BJ (cell line): ENCODE measurements at regions of chr3 and their contacts with region 1.

Region 1: GRCh38 chr3:186617038-186617946 is 4.4 kb downstream of the AHSG start:
- DNase-seq: peak; percentile 91
- H3K4me3 ChIP-seq: peak overlapping the region; percentile 19
- H3K27me3 ChIP-seq: no peaks in the 10 kb centered on the region; the same call in none of the 2 replicates
- CTCF ChIP-seq: peak; percentile 97

Region 2: GRCh38 chr3:185976977-185977678 is 640.2 kb before region 1 on chr3:
- CTCF ChIA-PET with region 1: interaction called, 14 read pairs
- POLR2A ChIA-PET with region 1: no interaction called
- DNase-seq: no peak
- H3K4me3 ChIP-seq: no peak overlapping the region
- H3K27me3 ChIP-seq: no peaks in the 10 kb centered on the region
- CTCF ChIP-seq: peak; percentile 96

Region 3: GRCh38 chr3:186598108-186598784 is 19.0 kb before region 1 on chr3:
- CTCF ChIA-PET with region 1: interaction called, 51 read pairs
- POLR2A ChIA-PET with region 1: interaction called, 7 read pairs
- DNase-seq: no peak
- H3K4me3 ChIP-seq: no peak overlapping the region
- H3K27me3 ChIP-seq: peaks cover 2% of the 10 kb centered on the region; the same call in 1 of the 2 replicates
- CTCF ChIP-seq: no peak

Region 4: DNA sequence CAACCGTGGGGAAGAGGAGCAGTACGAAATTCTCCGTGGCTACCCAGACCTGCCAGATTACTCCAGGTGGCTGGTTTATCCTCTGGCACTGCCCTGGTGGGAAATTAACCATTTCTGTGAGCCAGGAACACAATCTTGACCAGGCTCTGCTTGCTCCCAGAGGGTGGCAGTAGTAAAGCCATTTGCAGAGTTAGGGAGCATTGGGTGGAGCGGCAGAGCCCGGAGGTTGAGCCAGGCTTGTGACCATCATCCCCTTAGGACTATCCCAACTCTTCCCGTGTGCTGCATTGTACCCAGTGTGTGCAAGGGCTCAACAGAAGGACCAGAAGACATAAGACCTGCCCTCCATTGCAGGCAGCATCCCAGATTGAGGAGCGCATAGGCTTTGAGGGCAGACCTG is 105.2 kb after region 1 on chr3:
- CTCF ChIA-PET with region 1: interaction called, 11 read pairs
- POLR2A ChIA-PET with region 1: no interaction called
- DNase-seq: no peak
- H3K4me3 ChIP-seq: no peak overlapping the region
- H3K27me3 ChIP-seq: no peaks in the 10 kb centered on the region; the same call in 1 of the 2 replicates
- CTCF ChIP-seq: peak; percentile 34

Region 5: GRCh38 chr3:186772701-186773424 is 155.6 kb after region 1 on chr3:
- CTCF ChIA-PET with region 1: interaction called, 12 read pairs
- POLR2A ChIA-PET with region 1: no interaction called
- DNase-seq: no peak
- H3K4me3 ChIP-seq: peak overlapping the region; percentile 18
- H3K27me3 ChIP-seq: no peaks in the 10 kb centered on the region
- CTCF ChIP-seq: no peak

Region 6: DNA sequence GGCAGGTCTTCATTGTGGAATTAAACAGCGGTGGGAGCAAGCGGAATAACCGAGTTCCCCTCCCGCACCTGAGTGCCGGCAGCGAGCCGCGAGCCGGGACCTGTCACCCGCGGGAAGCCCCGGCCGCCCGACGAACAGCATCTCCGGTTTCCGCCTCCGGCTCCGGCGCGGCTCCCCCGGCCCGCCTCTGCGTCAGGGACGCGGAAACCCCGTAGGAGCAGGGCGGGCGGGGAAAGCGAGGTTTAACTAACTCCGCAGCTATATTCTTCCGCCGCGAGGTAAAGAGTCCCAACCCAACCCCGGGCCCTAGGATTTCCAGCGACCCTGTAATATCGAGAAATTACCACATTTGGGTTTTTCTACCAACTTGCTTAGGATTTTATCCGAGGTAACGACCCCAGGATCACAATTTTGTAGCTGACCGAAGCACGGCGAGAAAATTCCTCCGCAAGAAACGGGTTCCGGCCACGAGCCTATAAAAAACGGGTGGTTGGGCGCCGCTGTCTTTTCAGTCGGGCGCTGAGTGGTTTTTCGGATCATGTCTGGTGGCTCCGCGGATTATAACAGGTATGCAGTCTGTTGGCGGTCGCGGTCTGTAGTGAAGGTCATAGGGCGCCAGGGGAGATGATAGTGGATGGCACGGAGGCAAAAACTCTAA is 165.9 kb after region 1 on chr3 and contains the start of gene EIF4A2:
- CTCF ChIA-PET with region 1: interaction called, 10 read pairs
- POLR2A ChIA-PET with region 1: interaction called, 3 read pairs
- DNase-seq: no peak
- H3K4me3 ChIP-seq: peak within 1 kb of the TSS; percentile 93
- H3K27me3 ChIP-seq: no peaks in the 10 kb centered on the region
- CTCF ChIP-seq: no peak
- polyA plus RNA-seq, gene EIF4A2: 210 and 511 TPM in 2 replicates

Region 7: DNA sequence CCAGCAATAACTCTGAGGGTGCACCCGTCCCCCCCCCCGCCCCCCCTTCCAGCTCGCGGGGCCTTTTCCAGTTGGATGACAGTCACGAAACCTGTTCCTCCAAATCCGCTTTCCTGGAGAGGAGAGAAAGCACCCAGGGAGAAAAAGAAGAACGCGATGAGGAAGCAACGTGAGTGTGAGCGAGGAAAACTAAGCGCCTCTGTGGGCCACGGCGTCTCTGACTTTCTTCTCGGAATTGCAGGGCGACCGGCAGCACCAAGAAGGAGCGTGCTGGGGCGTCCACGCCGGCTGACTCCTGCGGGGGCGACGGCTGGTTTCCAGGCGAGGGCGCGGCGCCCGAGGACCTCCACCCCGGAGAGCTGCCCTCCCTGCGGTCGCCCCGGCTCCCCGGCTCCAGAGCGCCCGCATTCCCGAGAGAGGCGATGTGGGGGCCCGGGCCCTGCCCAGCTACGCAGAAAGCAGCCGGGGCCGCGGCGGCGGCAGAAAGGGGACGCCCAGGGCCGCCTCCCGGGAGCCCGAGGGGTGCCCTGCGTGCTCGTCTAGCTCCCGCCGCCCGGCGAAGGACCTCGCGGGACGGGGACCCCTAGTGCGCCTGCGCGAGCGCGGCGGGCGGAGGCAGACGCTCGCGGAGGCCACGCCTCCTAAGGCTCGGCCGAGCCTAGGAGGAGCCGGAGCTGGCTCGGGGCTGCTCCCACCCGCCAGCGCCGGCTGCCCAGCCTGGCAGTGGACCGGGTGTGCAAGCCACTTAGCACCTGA is 209.9 kb after region 1 on chr3:
- CTCF ChIA-PET with region 1: interaction called, 196 read pairs
- POLR2A ChIA-PET with region 1: no interaction called
- DNase-seq: no peak
- H3K4me3 ChIP-seq: peak overlapping the region; percentile 59
- H3K27me3 ChIP-seq: peaks cover 20% of the 10 kb centered on the region
- CTCF ChIP-seq: no peak